ENCODE measurements at regions of chr11 and their contacts with region 1.

Region 1: DNA sequence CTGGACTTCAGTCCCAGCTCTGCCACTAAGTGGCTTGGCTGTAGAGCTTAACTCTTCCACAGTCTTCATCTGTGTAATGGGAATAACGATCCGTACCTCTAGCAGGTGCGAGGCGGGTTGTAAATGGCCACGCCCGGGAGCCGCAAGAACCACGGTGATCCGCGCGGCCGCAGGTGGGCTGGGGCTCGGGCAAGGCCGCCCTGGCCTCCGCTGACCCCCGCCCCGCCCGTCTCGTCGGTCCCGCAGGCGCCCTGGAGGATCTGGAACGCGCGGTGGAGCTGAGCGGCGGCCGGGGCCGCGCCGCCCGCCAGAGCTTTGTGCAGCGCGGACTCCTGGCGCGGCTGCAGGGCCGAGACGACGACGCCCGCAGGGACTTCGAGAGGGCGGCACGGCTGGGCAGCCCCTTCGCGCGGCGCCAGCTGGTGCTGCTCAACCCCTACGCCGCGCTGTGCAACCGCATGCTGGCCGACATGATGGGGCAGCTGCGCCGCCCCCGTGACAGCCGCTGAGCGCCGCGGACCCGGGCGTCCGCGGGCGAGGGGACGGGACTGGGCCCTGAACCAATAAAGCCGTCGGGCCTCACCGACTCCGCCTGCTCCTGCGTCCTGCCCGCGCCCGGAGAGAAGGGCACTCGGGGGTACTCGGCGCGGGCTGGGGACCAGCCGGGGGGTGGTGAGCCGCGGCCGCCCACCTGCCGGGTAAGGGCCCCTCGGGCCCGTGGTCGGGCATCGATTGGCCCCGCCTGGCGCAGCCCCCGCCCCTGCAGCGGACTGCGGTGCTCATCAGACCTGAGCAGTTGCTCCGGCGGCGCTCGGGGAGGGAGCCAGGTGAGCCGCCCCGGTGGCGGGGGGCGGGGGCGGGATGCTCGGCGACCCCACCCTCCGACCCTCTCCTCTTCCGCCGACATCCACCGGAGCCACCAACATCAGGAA is at the start of gene TMEM25:
- DNase-seq: peak; percentile 50 to 77
- ATAC-seq: peak; percentile 81 to 83 (median 82)
- H3K4me3 ChIP-seq: peak within 1 kb of the TSS; percentile 46
- H3K4me3 Mint-ChIP-seq: peak within 1 kb of the TSS; percentile 90
- H3K27ac ChIP-seq: no peak within 1 kb of the TSS
- H3K27ac Mint-ChIP-seq: peak within 1 kb of the TSS in 1 of 2 donors; percentile 76
- H3K4me1 ChIP-seq: peaks cover 21% of the 10 kb centered on the region
- H3K4me1 Mint-ChIP-seq: peaks cover 32 to 33% of the 10 kb centered on the region in 2 donors
- H3K27me3 ChIP-seq: no peaks in the 10 kb centered on the region
- H3K27me3 Mint-ChIP-seq: no peaks in the 10 kb centered on the region
- CTCF ChIP-seq: no peak
- total RNA-seq, gene TMEM25: 4.1 to 11.0 (median 9.3) TPM

Region 2: GRCh38 chr11:118462178-118462577 is 68.5 kb before region 1 on chr11:
- intact Hi-C with region 1: no loop called
- DNase-seq: no peak
- ATAC-seq: no peak
- H3K4me3 ChIP-seq: no peak overlapping the region
- H3K4me3 Mint-ChIP-seq: no peak overlapping the region
- H3K27ac ChIP-seq: no peak overlapping the region
- H3K27ac Mint-ChIP-seq: no peak overlapping the region
- H3K4me1 ChIP-seq: no peaks in the 10 kb centered on the region
- H3K4me1 Mint-ChIP-seq: peaks cover 21 to 25% of the 10 kb centered on the region in 2 donors
- H3K27me3 ChIP-seq: no peaks in the 10 kb centered on the region
- H3K27me3 Mint-ChIP-seq: no peaks in the 10 kb centered on the region
- CTCF ChIP-seq: no peak

Region 3: GRCh38 chr11:118511576-118511975 is 19.1 kb before region 1 on chr11:
- intact Hi-C with region 1: no loop called
- DNase-seq: no peak
- ATAC-seq: no peak
- H3K4me3 ChIP-seq: no peak overlapping the region
- H3K4me3 Mint-ChIP-seq: no peak overlapping the region
- H3K27ac ChIP-seq: no peak overlapping the region
- H3K27ac Mint-ChIP-seq: no peak overlapping the region
- H3K4me1 ChIP-seq: no peaks in the 10 kb centered on the region
- H3K4me1 Mint-ChIP-seq: peaks cover 7 to 8% of the 10 kb centered on the region in 2 donors
- H3K27me3 ChIP-seq: no peaks in the 10 kb centered on the region
- H3K27me3 Mint-ChIP-seq: no peaks in the 10 kb centered on the region
- CTCF ChIP-seq: no peak

Region 4: GRCh38 chr11:118572061-118572980 is 41.6 kb after region 1 on chr11 and contains the start of gene ARCN1:
- intact Hi-C with region 1: loop called (anchors 2 kb)
- DNase-seq: peak; percentile 68 to 90
- ATAC-seq: peak; percentile 83 to 91 (median 89)
- H3K4me3 ChIP-seq: peak within 1 kb of the TSS; percentile 77
- H3K4me3 Mint-ChIP-seq: peak within 1 kb of the TSS; percentile 95
- H3K27ac ChIP-seq: peak within 1 kb of the TSS; percentile 98
- H3K27ac Mint-ChIP-seq: peak within 1 kb of the TSS; percentile 89 to 97
- H3K4me1 ChIP-seq: peaks cover 14% of the 10 kb centered on the region
- H3K4me1 Mint-ChIP-seq: peaks cover 46 to 47% of the 10 kb centered on the region in 2 donors
- H3K27me3 ChIP-seq: no peaks in the 10 kb centered on the region
- H3K27me3 Mint-ChIP-seq: no peaks in the 10 kb centered on the region
- CTCF ChIP-seq: no peak
- total RNA-seq, gene ARCN1: 72.9 to 88.6 (median 88.4) TPM